ENCODE measurements at regions of chr2 and their contacts with region 1.

Region 1: GRCh38 chr2:45759310-45759851 is 107.9 kb downstream of the PRKCE start:
- DNase-seq: no peak
- H3K4me3 Mint-ChIP-seq: no peak overlapping the region
- H3K27ac Mint-ChIP-seq: no peak overlapping the region
- H3K4me1 Mint-ChIP-seq: no peaks in the 10 kb centered on the region
- H3K27me3 Mint-ChIP-seq: no peaks in the 10 kb centered on the region

Region 2: GRCh38 chr2:45771261-45771660 is 11.9 kb after region 1 on chr2:
- intact Hi-C with region 1: no loop called
- DNase-seq: no peak
- H3K4me3 Mint-ChIP-seq: no peak overlapping the region
- H3K27ac Mint-ChIP-seq: no peak overlapping the region
- H3K4me1 Mint-ChIP-seq: no peaks in the 10 kb centered on the region
- H3K27me3 Mint-ChIP-seq: peaks cover 7% of the 10 kb centered on the region

Region 3: GRCh38 chr2:45808294-45808800 is 49.0 kb after region 1 on chr2:
- intact Hi-C with region 1: loop called (anchors 2 kb)
- DNase-seq: no peak
- H3K4me3 Mint-ChIP-seq: no peak overlapping the region
- H3K27ac Mint-ChIP-seq: no peak overlapping the region
- H3K4me1 Mint-ChIP-seq: no peaks in the 10 kb centered on the region
- H3K27me3 Mint-ChIP-seq: peaks cover 6% of the 10 kb centered on the region

Measured in activated T-helper 1 cell treated with anti-CD3 and anti-CD28 coated beads, Interleukin-12 subunit alpha, Interleukin-12 subunit beta, Interleukin-2, Interleukin-4 antibody, amounts not matched to agents 30 ng/mL and 10 ng/mL and 1 ng/mL, durations not matched to agents 14 hours and 24 hours and 36 hours (primary cell).